PC-3 (cell line): ENCODE measurements at regions of chr7 and their contacts with region 1.

Region 1: GRCh38 chr7:125136755-125137547 is 207.3 kb upstream of the POT1 start:
- DNase-seq: peak; percentile 61
- ATAC-seq: peak; percentile 84
- H3K4me3 ChIP-seq: peak overlapping the region; percentile 34
- H3K27ac ChIP-seq: peak overlapping the region; percentile 55
- H3K4me1 ChIP-seq: peaks cover 19% of the 10 kb centered on the region; the same call in 1 of the 2 replicates
- H3K27me3 ChIP-seq: no peaks in the 10 kb centered on the region
- CTCF ChIP-seq: no peak

Region 2: GRCh38 chr7:125201002-125201401 is 64.1 kb after region 1 on chr7:
- CTCF ChIA-PET with region 1: no interaction called
- POLR2A ChIA-PET with region 1: no interaction called
- intact Hi-C with region 1: loop called (anchors 2 kb)
- DNase-seq: no peak
- ATAC-seq: no peak
- H3K4me3 ChIP-seq: no peak overlapping the region
- H3K27ac ChIP-seq: no peak overlapping the region
- H3K4me1 ChIP-seq: no peaks in the 10 kb centered on the region
- H3K27me3 ChIP-seq: no peaks in the 10 kb centered on the region
- CTCF ChIP-seq: no peak